Activated naive CD8-positive, alpha-beta T cell treated with anti-CD3 and anti-CD28 coated beads, Interleukin-2, amount 10 ng/mL, durations not matched to agents 7 days and 5 days (primary cell): ENCODE measurements at regions of chr20 and their contacts with region 1.

Region 1: GRCh38 chr20:33719989-33720709 is at the start of gene PXMP4:
- DNase-seq: peak; percentile 86
- ATAC-seq: peak; percentile 98
- H3K4me3 Mint-ChIP-seq: peak within 1 kb of the TSS; percentile 90
- H3K27ac Mint-ChIP-seq: peak within 1 kb of the TSS; percentile 91
- H3K4me1 Mint-ChIP-seq: peaks cover 24% of the 10 kb centered on the region
- H3K27me3 Mint-ChIP-seq: no peaks in the 10 kb centered on the region
- total RNA-seq, gene PXMP4: 13.4 to 19.2 TPM

Region 2: GRCh38 chr20:33679758-33680485 is 40.2 kb before region 1 on chr20:
- POLR2A ChIA-PET with region 1: interaction called, 15 read pairs
- DNase-seq: peak; percentile 70
- ATAC-seq: peak; percentile 74
- H3K4me3 Mint-ChIP-seq: peak overlapping the region; percentile 41
- H3K27ac Mint-ChIP-seq: peak overlapping the region; percentile 81
- H3K4me1 Mint-ChIP-seq: peaks cover 61% of the 10 kb centered on the region
- H3K27me3 Mint-ChIP-seq: no peaks in the 10 kb centered on the region

Region 3: DNA sequence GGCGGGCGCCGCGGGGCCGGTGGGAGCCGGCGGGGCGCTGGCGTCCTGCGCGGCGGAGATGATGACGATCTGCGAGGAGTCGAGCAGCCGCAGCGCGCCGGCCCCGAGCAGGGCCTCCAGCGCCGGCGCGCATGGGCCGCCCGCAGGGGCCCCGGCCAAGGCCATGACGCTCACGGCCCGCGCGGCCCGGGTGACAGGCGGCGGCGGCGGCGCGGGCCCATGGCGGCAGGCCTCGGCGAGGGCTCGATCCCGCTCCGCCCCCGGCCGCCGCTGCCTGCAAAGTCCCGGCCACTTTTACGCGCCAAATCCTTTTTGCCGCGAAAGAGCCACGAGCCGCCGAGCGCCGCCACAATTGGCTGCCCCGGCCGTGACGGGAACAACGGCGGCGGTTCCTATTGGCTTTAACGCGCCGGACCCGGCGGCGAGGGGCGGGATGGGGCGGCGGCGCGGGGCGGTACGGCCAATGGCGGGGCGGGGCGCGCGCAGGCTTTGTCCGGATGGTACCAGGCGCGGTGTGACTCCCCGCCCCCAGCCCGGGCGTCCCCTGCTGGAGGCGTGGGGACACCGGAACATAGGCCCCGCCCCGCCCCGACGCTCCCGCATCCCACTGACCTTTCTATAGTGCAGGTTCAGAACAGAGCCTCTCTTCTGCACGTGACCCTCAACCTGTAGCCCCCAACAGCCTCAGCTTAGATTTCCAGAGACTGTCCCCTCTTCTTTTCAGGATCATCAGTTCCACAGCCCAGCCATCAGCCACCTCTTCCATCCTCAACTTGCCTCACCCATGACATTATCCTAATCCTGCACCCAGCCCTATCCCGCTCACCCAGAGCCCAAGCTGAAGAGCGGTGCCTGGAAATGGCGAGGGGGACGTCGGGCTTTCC is 33.8 kb before region 1 on chr20 and contains the start of gene E2F1:
- POLR2A ChIA-PET with region 1: interaction called, 46 read pairs
- DNase-seq: peak; percentile 99
- ATAC-seq: peak; percentile 85
- H3K4me3 Mint-ChIP-seq: peak within 1 kb of the TSS; percentile 93
- H3K27ac Mint-ChIP-seq: peak within 1 kb of the TSS; percentile 90
- H3K4me1 Mint-ChIP-seq: peaks cover 70% of the 10 kb centered on the region
- H3K27me3 Mint-ChIP-seq: no peaks in the 10 kb centered on the region
- total RNA-seq, gene E2F1: 62.5 to 68.4 TPM

Region 4: DNA sequence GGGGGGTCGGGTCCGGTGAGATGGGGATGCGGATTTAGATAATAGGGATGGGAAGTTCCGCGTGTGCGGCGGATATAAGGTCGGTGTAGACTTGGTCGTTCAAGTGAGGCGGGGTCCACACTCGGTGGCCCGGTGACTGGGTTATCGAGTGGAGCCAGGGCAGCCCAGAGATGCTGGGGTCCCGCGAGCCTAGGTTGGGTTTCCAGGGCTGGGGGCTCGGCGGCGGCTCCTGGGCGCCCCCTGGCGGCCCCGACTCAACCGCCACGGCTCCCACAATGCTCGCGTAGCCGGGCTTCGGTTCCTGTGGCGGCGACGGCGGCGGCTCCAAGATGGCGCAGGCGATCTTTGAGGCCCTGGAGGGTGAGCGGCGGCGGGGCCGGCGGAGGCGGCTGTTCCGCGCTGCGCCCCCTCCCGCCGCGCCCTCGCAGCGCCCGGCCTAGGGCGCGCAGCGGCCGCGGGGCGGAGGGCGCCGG is 11.6 kb after region 1 on chr20 and contains the start of gene ZNF341:
- POLR2A ChIA-PET with region 1: interaction called, 24 read pairs
- DNase-seq: no peak
- ATAC-seq: peak; percentile 86
- H3K4me3 Mint-ChIP-seq: peak within 1 kb of the TSS; percentile 87
- H3K27ac Mint-ChIP-seq: peak within 1 kb of the TSS; percentile 90
- H3K4me1 Mint-ChIP-seq: peaks cover 18% of the 10 kb centered on the region
- H3K27me3 Mint-ChIP-seq: no peaks in the 10 kb centered on the region
- total RNA-seq, gene ZNF341: 5.1 to 5.7 TPM

Region 5: GRCh38 chr20:33843854-33844253 is 123.7 kb after region 1 on chr20:
- POLR2A ChIA-PET with region 1: no interaction called
- DNase-seq: no peak
- ATAC-seq: peak; percentile 84
- H3K4me3 Mint-ChIP-seq: peak overlapping the region; percentile 28
- H3K27ac Mint-ChIP-seq: peak overlapping the region; percentile 37
- H3K4me1 Mint-ChIP-seq: peaks cover 63% of the 10 kb centered on the region
- H3K27me3 Mint-ChIP-seq: no peaks in the 10 kb centered on the region

Region 6: GRCh38 chr20:33994222-33994913 is 274.2 kb after region 1 on chr20:
- POLR2A ChIA-PET with region 1: no interaction called
- DNase-seq: peak; percentile 90
- ATAC-seq: peak; percentile 43
- H3K4me3 Mint-ChIP-seq: peak overlapping the region; percentile 99
- H3K27ac Mint-ChIP-seq: peak overlapping the region; percentile 98
- H3K4me1 Mint-ChIP-seq: peaks cover 48% of the 10 kb centered on the region
- H3K27me3 Mint-ChIP-seq: no peaks in the 10 kb centered on the region